Panc1 (cell line): ENCODE measurements at regions of chr17 and their contacts with region 1.

Region 1: GRCh38 chr17:50816771-50817751 is 18.3 kb upstream of the WFIKKN2 start:
- DNase-seq: peak; percentile 7
- ATAC-seq: peak; percentile 73
- H3K4me3 ChIP-seq: peak overlapping the region; percentile 17 to 28
- H3K27ac ChIP-seq: no peak overlapping the region
- H3K4me1 ChIP-seq: no peaks in the 10 kb centered on the region
- H3K27me3 ChIP-seq: peaks cover 2% of the 10 kb centered on the region
- CTCF ChIP-seq: peak; percentile 97

Region 2: GRCh38 chr17:50213026-50214022 is 603.7 kb before region 1 on chr17:
- CTCF ChIA-PET with region 1: no interaction called
- POLR2A ChIA-PET with region 1: interaction called, 12 read pairs
- in situ Hi-C with region 1: no loop called
- intact Hi-C with region 1: no loop called
- DNase-seq: no peak
- ATAC-seq: peak; percentile 49; the same call in 1 of the 2 replicates
- H3K4me3 ChIP-seq: no peak overlapping the region
- H3K27ac ChIP-seq: no peak overlapping the region
- H3K4me1 ChIP-seq: peaks cover 20% of the 10 kb centered on the region
- H3K27me3 ChIP-seq: no peaks in the 10 kb centered on the region
- CTCF ChIP-seq: no peak; the same call in 1 of the 2 replicates

Region 3: DNA sequence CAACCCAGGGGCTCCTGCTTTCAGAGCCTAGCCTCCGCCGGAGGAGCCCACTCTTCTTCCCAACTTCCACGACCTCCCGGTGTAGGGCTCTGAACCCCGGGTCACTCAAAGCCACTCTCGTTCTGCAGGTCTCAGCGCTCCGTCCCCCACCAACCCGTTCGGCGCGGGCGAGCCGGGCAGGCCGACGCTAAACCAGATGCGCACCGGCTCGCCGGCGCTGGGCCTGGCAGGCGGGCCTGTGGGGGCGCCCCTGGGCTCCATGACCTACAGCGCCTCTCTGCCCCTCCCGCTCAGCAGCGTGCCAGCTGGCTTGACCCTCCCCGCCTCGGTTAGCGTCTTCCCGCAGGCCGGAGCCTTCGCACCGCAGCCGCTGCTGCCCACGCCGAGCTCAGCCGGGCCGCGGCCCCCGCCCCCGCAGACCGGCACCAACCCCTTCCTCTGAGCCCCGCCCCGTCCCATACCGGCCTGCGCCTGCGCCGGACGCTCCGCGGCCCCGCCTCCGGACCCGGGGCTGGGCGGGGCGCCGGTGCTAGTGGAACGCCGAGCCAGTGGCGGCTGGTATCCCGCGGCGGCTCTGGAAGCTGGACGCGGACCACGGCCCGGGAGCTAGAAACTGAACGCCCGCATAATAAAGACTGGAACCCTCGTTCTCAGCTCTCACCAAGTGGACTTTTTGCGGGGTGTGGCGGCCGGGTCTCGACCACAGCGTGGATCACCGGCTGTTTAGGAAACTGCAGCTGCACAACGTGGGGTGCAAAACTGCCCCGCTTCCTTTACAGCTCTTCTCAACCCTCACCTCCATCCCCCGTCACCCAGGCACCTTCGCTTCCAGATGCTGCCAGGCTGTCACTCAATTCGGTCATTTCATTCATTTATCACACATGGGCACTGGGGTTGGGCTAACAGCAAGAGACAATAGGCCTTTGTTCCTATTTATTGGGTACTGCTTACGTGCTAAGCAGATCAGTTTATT is 275.1 kb before region 1 on chr17:
- CTCF ChIA-PET with region 1: no interaction called
- POLR2A ChIA-PET with region 1: no interaction called
- in situ Hi-C with region 1: no loop called
- intact Hi-C with region 1: no loop called
- DNase-seq: no peak
- ATAC-seq: peak; percentile 89
- H3K4me3 ChIP-seq: peak overlapping the region; percentile 59 to 71
- H3K27ac ChIP-seq: peak overlapping the region; percentile 95
- H3K4me1 ChIP-seq: peaks cover 40% of the 10 kb centered on the region
- H3K27me3 ChIP-seq: no peaks in the 10 kb centered on the region
- CTCF ChIP-seq: no peak; the same call in 1 of the 2 replicates